Natural killer cell (primary cell): ENCODE measurements at regions of chr1 and their contacts with region 1.

Region 1: GRCh38 chr1:14778898-14779865 is 180.7 kb downstream of the KAZN start:
- DNase-seq: peak in 1 of 2 donors; percentile 33
- ATAC-seq: peak in 1 of 3 donors; percentile 34
- H3K4me3 ChIP-seq: no peak overlapping the region
- H3K4me3 Mint-ChIP-seq: no peak overlapping the region
- H3K27ac ChIP-seq: no peak overlapping the region
- H3K27ac Mint-ChIP-seq: no peak overlapping the region
- H3K4me1 ChIP-seq: no peaks in the 10 kb centered on the region
- H3K4me1 Mint-ChIP-seq: peaks cover 0 to 9% of the 10 kb centered on the region in 2 donors
- H3K27me3 ChIP-seq: no peaks in the 10 kb centered on the region
- H3K27me3 Mint-ChIP-seq: peaks cover 3 to 8% of the 10 kb centered on the region in 2 donors
- CTCF ChIP-seq: peak; percentile 62

Region 2: DNA sequence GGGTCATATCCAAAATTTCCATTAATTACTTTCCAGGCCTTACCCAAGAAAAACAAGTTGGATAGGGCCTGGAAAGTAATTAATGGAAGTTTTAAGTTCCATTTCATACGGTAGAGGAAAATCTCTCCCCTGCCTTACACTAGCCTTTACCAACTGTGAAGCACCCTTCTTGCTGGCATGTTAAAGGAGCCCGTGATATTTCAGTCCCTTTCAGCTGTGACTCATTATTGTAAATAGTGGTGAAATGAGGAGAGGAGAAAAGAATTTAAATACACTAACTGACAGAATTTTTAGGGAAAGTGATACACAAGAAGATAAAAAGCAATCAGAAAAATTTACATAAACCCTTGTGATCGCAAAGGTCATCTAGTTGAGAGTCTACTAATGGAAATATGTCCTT is 201.0 kb before region 1 on chr1:
- intact Hi-C with region 1: no loop called
- DNase-seq: no peak
- ATAC-seq: no peak
- H3K4me3 ChIP-seq: no peak overlapping the region
- H3K4me3 Mint-ChIP-seq: no peak overlapping the region
- H3K27ac ChIP-seq: no peak overlapping the region
- H3K27ac Mint-ChIP-seq: no peak overlapping the region
- H3K4me1 ChIP-seq: no peaks in the 10 kb centered on the region
- H3K4me1 Mint-ChIP-seq: no peaks in the 10 kb centered on the region
- H3K27me3 ChIP-seq: no peaks in the 10 kb centered on the region
- H3K27me3 Mint-ChIP-seq: peaks cover 13 to 14% of the 10 kb centered on the region in 2 donors
- CTCF ChIP-seq: no peak

Region 3: GRCh38 chr1:14704846-14705245 is 74.3 kb before region 1 on chr1:
- intact Hi-C with region 1: no loop called
- DNase-seq: no peak
- ATAC-seq: no peak
- H3K4me3 ChIP-seq: no peak overlapping the region
- H3K4me3 Mint-ChIP-seq: no peak overlapping the region
- H3K27ac ChIP-seq: no peak overlapping the region
- H3K27ac Mint-ChIP-seq: no peak overlapping the region
- H3K4me1 ChIP-seq: no peaks in the 10 kb centered on the region
- H3K4me1 Mint-ChIP-seq: no peaks in the 10 kb centered on the region
- H3K27me3 ChIP-seq: no peaks in the 10 kb centered on the region
- H3K27me3 Mint-ChIP-seq: peaks cover 13 to 16% of the 10 kb centered on the region in 2 donors
- CTCF ChIP-seq: no peak

Region 4: GRCh38 chr1:14742181-14742980 is 36.8 kb before region 1 on chr1:
- intact Hi-C with region 1: no loop called
- DNase-seq: no peak
- ATAC-seq: peak in 1 of 3 donors; percentile 11
- H3K4me3 ChIP-seq: no peak overlapping the region
- H3K4me3 Mint-ChIP-seq: no peak overlapping the region
- H3K27ac ChIP-seq: no peak overlapping the region
- H3K27ac Mint-ChIP-seq: no peak overlapping the region
- H3K4me1 ChIP-seq: no peaks in the 10 kb centered on the region
- H3K4me1 Mint-ChIP-seq: no peaks in the 10 kb centered on the region
- H3K27me3 ChIP-seq: no peaks in the 10 kb centered on the region
- H3K27me3 Mint-ChIP-seq: peaks cover 14 to 37% of the 10 kb centered on the region in 2 donors
- CTCF ChIP-seq: no peak

Region 5: GRCh38 chr1:14850566-14850965 is 71.4 kb after region 1 on chr1:
- intact Hi-C with region 1: no loop called
- DNase-seq: no peak
- ATAC-seq: no peak
- H3K4me3 ChIP-seq: no peak overlapping the region
- H3K4me3 Mint-ChIP-seq: no peak overlapping the region
- H3K27ac ChIP-seq: no peak overlapping the region
- H3K27ac Mint-ChIP-seq: no peak overlapping the region
- H3K4me1 ChIP-seq: no peaks in the 10 kb centered on the region
- H3K4me1 Mint-ChIP-seq: no peaks in the 10 kb centered on the region
- H3K27me3 ChIP-seq: no peaks in the 10 kb centered on the region
- H3K27me3 Mint-ChIP-seq: peaks cover 5 to 18% of the 10 kb centered on the region in 2 donors
- CTCF ChIP-seq: no peak

Region 6: DNA sequence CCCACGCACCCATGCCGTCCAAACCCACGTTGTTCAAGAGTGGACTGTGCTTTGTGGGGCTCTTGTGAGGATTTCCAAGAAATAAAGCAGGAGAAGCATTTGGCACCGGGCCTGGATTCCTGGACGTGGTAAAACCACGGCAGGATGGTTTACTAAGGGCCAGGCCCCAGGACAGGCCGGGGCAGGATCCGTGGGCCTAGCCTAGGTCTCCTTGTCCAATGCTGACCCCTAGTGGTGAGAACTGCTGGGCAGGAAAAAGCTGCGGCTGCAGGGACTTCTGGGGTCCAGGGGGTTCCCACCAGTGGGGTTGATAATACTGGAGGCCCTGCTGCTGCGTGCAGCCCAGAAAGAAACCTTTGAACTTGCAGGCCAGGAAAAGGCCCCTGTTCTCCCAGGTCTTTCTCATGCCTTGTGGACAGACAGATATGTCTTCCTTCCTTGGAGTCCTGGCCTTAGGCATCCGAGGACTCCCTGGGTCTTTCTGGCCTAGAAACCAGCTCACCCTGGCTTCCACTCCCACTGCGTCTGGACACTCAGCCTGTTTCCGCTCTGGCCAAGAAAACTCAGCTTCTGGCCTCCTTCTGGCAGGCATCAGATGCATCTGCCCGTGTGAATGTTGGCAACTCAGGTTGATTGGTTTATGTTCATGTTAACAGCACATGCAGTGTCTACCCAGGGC is 267.4 kb after region 1 on chr1:
- intact Hi-C with region 1: loop called (anchors 1 kb)
- DNase-seq: peak; percentile 60 to 67
- ATAC-seq: peak; percentile 66 to 88 (median 80)
- H3K4me3 ChIP-seq: no peak overlapping the region
- H3K4me3 Mint-ChIP-seq: no peak overlapping the region
- H3K27ac ChIP-seq: no peak overlapping the region
- H3K27ac Mint-ChIP-seq: no peak overlapping the region
- H3K4me1 ChIP-seq: no peaks in the 10 kb centered on the region
- H3K4me1 Mint-ChIP-seq: peaks cover 0 to 6% of the 10 kb centered on the region in 2 donors
- H3K27me3 ChIP-seq: no peaks in the 10 kb centered on the region
- H3K27me3 Mint-ChIP-seq: no peaks in the 10 kb centered on the region
- CTCF ChIP-seq: peak; percentile 90